G401 (cell line): ENCODE measurements at regions of chr15 and their contacts with region 1.

Region 1: DNA sequence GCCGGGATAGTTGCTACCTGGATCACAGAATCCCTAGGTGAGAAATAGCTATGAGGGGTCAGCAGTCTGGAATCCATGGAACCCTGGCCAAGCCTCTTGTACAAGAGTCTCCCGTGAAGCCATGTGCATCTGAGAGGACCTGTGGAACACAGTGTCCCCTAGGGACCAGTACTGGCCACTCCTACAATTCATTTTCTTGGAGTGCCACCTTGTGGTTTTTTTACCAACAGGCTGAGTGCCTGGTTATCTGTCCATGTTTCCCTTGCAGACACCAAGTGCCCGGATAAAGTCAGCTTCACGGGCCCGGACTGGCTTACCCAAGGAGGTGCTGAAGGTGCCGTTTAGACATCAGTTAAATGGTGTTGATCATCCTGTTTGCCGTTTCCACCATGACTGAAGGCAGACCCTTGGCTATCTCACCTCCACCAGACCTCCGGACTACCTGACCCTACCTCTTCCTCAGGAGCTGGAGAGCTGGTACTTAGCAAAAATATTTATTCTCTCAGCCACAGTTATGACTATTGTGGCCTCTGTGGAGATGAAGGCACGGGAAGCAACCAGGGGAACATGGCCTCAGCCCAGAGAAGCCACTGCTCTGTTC is 93.9 kb downstream of the RBPMS2 start:
- DNase-seq: peak; percentile 72

Region 2: GRCh38 chr15:64780600-64781156 is 99.2 kb after region 1 on chr15:
- in situ Hi-C with region 1: loop called (anchors 10 kb)
- DNase-seq: no peak